Activated B cell treated with CpG ODN at 0.5 μM for 24 hours (primary cell): ENCODE measurements at regions of chr19 and their contacts with region 1.

Region 1: GRCh38 chr19:52637718-52638585 is at the start of gene ZNF83:
- DNase-seq: peak; percentile 89
- ATAC-seq: peak; percentile 94
- H3K4me3 Mint-ChIP-seq: peak within 1 kb of the TSS; percentile 95
- H3K27ac Mint-ChIP-seq: peak within 1 kb of the TSS; percentile 98
- H3K4me1 Mint-ChIP-seq: peaks cover 15% of the 10 kb centered on the region
- H3K27me3 Mint-ChIP-seq: no peaks in the 10 kb centered on the region
- CTCF ChIP-seq: no peak
- total RNA-seq, gene ZNF83: 42.3 and 49.4 TPM in 2 replicates

Region 2: DNA sequence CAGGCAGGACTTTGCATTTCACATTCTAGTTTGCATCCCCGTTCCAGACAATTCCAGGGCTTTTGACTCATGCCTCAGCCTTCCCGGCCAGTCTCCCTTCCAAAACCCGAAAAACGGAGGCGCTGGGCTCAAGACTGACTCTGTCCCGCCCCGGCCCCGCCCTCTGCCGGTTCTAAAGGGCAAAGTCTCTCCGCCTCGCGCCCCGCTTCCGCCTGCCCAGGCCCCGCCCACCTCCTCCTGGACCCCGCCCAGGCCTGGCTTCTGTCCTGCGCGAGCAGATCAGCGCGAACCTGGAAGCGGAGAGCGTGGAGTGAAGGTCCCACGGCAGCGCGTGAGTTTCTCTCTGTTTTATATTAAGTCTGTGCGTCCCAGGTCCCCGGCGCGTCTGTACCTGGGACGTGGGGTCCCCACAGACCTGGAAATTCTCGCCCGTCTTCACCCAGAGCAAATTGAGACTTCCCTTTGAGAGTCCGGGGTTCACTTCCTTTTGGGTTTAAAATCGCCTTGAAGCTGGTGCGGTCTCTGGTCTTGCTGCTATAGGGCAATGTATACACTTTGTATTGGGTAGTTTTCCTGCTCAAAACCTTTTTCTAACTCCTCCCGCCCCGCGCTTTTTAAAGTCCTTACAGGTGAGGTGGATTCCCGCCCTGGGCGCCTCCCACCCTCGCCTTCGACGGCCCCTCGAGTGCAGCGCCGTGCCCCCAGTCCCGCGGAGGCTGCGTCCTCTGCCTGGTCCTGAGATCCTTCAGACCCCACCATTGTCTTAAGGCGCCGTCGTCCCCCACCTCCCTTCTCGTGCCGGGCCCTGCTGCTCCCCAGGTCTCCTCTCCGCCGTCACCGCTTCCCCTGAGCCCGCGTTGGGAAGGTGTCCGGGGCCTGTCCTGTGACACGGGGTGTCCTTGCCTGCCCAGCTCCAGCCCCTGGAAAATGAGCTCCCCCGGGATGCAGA is 36.7 kb before region 1 on chr19:
- CTCF ChIA-PET with region 1: no interaction called
- POLR2A ChIA-PET with region 1: no interaction called
- intact Hi-C with region 1: loop called (anchors 1 kb)
- DNase-seq: peak; percentile 95
- ATAC-seq: peak; percentile 99
- H3K4me3 Mint-ChIP-seq: peak overlapping the region; percentile 93
- H3K27ac Mint-ChIP-seq: peak overlapping the region; percentile 86
- H3K4me1 Mint-ChIP-seq: peaks cover 26% of the 10 kb centered on the region
- H3K27me3 Mint-ChIP-seq: no peaks in the 10 kb centered on the region
- CTCF ChIP-seq: no peak

Region 3: GRCh38 chr19:52786457-52787359 is 148.8 kb after region 1 on chr19 and contains the start of gene ZNF600:
- CTCF ChIA-PET with region 1: no interaction called
- POLR2A ChIA-PET with region 1: no interaction called
- intact Hi-C with region 1: loop called (anchors 1 kb)
- DNase-seq: peak; percentile 88
- ATAC-seq: peak; percentile 99
- H3K4me3 Mint-ChIP-seq: peak within 1 kb of the TSS; percentile 96
- H3K27ac Mint-ChIP-seq: peak within 1 kb of the TSS; percentile 90
- H3K4me1 Mint-ChIP-seq: peaks cover 36% of the 10 kb centered on the region
- H3K27me3 Mint-ChIP-seq: no peaks in the 10 kb centered on the region
- CTCF ChIP-seq: no peak
- total RNA-seq, gene ZNF600: 25.2 and 30.5 TPM in 2 replicates

Region 4: GRCh38 chr19:53826876-53827275 is 1188.9 kb after region 1 on chr19:
- CTCF ChIA-PET with region 1: no interaction called
- POLR2A ChIA-PET with region 1: no interaction called
- intact Hi-C with region 1: loop called (anchors 10 kb)
- DNase-seq: no peak
- ATAC-seq: no peak
- H3K4me3 Mint-ChIP-seq: no peak overlapping the region
- H3K27ac Mint-ChIP-seq: no peak overlapping the region
- H3K4me1 Mint-ChIP-seq: peaks cover 3% of the 10 kb centered on the region
- H3K27me3 Mint-ChIP-seq: peaks cover 24% of the 10 kb centered on the region
- CTCF ChIP-seq: no peak